ENCODE measurements at regions of chr5 and their contacts with region 1.

Region 1: GRCh38 chr5:129664337-129664937 is 83.5 kb upstream of the MINAR2 start:
- DNase-seq: no peak
- H3K4me3 ChIP-seq: no peak overlapping the region
- H3K27me3 ChIP-seq: no peaks in the 10 kb centered on the region
- CTCF ChIP-seq: peak; percentile 83

Region 2: DNA sequence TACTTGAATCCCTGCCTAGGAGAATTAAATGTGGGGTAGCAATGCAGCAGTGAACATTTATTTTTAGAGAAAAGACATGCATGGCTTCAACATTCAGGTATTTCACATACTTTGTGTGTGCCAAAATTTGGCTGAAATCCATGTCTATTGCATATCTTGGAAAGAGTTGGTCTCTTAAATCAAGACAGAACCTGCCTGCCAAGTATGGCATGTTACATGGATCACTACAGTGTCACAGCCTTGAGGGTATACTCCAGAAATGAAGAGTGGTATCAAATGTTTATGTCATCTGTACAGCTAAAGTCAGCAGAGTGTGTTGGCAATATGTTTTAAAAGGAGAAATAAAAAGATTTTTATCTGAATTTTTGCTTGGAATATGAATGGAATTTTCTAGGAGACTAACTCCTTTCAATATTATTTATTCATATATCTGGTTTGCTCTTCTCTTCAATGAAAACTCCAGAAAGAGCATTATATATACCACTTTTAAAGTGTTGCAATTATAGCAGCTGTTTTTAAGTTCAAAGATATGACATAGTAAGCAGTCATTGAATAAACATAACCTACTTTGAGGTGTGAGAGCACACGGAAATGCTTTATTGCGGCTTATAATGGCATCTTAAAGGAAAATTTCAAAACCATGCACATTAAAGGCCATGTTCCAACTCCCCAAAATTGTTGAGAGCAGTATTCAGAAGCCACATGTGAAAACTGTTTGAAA is 11.9 kb before region 1 on chr5:
- CTCF ChIA-PET with region 1: interaction called, 13 read pairs
- POLR2A ChIA-PET with region 1: no interaction called
- DNase-seq: no peak
- H3K4me3 ChIP-seq: no peak overlapping the region
- H3K27me3 ChIP-seq: no peaks in the 10 kb centered on the region
- CTCF ChIP-seq: no peak

Measured in BJ (cell line).